ENCODE measurements at regions of chr17 and their contacts with region 1.

Region 1: GRCh38 chr17:78708510-78708973 is 73.5 kb downstream of the CYTH1 start:
- DNase-seq: peak; percentile 54
- CTCF ChIP-seq: peak; percentile 73

Region 2: GRCh38 chr17:78658281-78658785 is 50.2 kb before region 1 on chr17:
- CTCF ChIA-PET with region 1: no interaction called
- POLR2A ChIA-PET with region 1: no interaction called
- DNase-seq: no peak
- CTCF ChIP-seq: no peak

Region 3: GRCh38 chr17:78689029-78689428 is 19.5 kb before region 1 on chr17:
- CTCF ChIA-PET with region 1: interaction called, 10 read pairs
- POLR2A ChIA-PET with region 1: interaction called, 4 read pairs
- DNase-seq: no peak
- CTCF ChIP-seq: peak; percentile 22

Region 4: GRCh38 chr17:78697554-78698343 is 10.8 kb before region 1 on chr17:
- CTCF ChIA-PET with region 1: interaction called, 15 read pairs
- POLR2A ChIA-PET with region 1: interaction called, 6 read pairs
- DNase-seq: no peak
- CTCF ChIP-seq: no peak

Region 5: DNA sequence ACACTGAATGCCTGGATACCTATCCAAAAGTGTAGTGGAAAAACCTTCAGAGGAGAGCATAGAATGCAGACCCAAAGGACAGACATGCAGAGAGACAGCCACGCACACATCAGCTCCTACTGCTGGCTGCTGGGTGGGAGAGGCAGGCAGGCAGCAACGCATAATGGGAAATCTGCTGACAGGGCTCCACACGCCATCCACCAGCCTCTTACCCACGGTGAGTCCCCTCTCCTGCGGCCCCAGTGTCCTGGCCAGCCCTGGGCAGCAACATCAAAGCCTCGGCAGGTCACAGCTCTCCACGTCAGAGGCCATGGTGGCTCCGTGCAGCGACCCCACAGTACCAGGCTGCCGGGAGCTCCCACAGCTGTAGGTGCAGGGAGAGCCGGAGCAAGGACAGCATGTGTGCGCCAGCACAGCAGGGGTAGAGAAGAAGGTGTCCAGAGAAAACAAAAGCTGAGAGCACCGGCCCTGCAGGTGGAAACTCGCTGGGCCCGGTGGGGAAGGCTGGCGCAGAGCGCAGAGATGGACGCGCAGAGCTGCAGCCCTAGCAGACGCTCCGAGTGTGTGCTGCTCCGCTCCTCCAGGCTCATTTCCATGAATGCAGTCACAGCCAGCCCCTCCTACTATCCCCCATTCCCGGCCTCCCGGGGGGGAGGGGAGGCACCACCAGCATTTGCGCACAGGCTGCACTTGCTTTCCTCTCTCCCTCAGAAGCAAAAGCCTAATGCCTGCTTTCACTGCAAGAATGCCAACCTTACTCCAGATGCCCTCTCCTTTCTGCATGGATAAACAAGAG is 14.7 kb after region 1 on chr17:
- CTCF ChIA-PET with region 1: interaction called, 50 read pairs
- POLR2A ChIA-PET with region 1: interaction called, 6 read pairs
- DNase-seq: no peak
- CTCF ChIP-seq: no peak

Region 6: DNA sequence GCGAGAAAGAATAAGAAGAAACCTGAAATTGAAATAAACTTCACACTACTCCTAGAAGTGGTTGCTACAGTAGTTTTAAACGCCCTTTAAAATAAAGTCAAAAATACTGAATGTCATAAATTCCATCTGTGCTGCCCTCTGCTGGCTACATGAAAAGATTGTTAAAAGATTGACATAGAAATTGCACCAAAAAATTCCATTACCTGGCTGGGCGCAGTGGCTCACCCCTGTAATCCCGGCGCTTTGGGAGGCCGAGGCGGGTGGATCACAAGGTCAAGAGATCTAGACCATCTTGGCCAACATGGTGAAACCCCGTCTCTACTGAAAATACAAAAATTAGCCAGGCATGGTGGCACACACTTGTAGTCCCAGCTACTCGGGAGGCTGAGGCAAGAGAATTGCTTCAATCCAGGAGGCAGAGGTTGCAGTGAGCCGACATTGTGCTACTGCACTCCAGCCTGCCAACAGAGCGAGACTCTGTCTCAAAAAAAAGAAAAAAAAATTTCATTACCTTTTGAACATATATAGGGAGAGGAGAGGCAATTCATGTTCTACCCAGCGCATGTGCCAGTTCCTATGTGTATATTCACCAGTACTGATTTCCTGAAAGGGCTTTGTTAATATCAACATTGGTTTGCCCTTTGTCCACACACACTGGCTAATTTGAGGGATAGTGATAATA is 37.0 kb after region 1 on chr17:
- CTCF ChIA-PET with region 1: interaction called, 23 read pairs
- POLR2A ChIA-PET with region 1: no interaction called
- DNase-seq: no peak
- CTCF ChIP-seq: peak; percentile 38